HCT116 (cell line): ENCODE measurements at regions of chr14 and their contacts with region 1.

Region 1: GRCh38 chr14:56491299-56492285 is 88.0 kb upstream of the TMEM260 start:
- DNase-seq: peak; percentile 79
- ATAC-seq: peak; percentile 89
- H3K4me3 ChIP-seq: no peak overlapping the region
- H3K27ac ChIP-seq: no peak overlapping the region
- H3K4me1 ChIP-seq: no peaks in the 10 kb centered on the region
- H3K27me3 ChIP-seq: 0 out of 2 replicates have a peak, but pooled peaks cover 4% of the 10 kb centered on the region
- CTCF ChIP-seq: peak; percentile 55 to 81 (median 76); a peak in 5 of 6 replicates
- POLR2A ChIP-seq: no peak
- RAD21 ChIP-seq: peak; percentile 77

Region 2: DNA sequence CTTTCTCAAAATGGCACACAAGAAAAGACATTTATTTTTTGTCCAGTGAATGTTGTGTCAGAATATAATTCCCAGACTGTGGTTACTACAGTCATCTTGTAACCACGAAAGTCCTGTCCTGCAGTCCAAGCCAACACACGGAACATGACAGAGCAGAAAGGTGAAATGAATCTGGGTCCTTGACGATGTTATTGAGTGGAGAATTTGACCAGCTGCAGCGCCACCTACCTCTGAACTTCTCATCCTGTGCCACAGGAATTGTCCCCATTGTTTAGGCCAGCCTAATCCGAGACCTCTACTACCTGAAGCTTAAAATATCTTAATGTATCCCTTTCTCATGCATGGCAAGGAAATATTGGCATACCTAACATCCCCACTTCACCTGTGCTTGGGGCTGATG is 382.8 kb after region 1 on chr14:
- CTCF ChIA-PET with region 1: interaction called, 3 read pairs
- POLR2A ChIA-PET with region 1: no interaction called
- RAD21 ChIA-PET with region 1: no interaction called
- intact Hi-C with region 1: loop called (anchors 1 kb)
- DNase-seq: peak; percentile 26
- ATAC-seq: peak; percentile 96
- H3K4me3 ChIP-seq: no peak overlapping the region
- H3K27ac ChIP-seq: no peak overlapping the region
- H3K4me1 ChIP-seq: no peaks in the 10 kb centered on the region; a peak in 1 of 4 replicates
- H3K27me3 ChIP-seq: peaks cover 9% of the 10 kb centered on the region; the same call in 1 of the 2 replicates
- CTCF ChIP-seq: peak; percentile 23 to 72 (median 64); a peak in 5 of 6 replicates
- POLR2A ChIP-seq: no peak
- RAD21 ChIP-seq: peak; percentile 49

Region 3: DNA sequence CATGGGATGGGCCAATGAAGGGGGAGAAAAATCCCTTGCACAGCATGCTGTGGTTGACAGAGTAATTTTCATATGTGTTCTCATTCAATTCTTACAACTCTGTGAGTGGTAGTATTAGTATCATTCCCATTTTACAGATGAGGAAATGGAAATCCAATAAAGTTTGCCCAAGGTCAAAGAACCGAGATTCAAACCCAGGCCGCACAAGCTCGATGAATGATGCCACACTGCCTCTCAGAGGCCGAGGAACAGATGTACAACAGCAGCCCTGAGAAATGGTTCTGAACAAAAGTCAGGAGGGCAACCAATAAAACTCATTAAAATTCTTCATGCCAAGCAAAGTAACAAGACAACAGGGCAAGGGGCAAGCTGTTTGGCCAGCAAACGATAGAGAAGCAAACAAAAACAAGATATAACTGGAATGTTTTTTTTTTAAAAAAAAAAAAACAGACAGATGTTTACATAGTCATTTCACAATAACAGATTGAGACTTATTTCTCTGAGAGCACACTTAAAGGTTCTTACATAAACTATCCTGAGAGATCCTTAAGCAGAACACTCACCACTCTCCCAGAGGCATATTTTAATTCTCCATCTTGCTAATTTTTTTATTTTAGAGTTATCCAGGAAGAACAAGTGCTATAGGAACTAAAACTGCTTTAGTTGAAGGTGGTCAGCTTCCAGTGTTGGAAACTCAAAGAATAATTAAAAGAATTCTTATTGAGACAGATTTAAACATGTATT is 691.3 kb after region 1 on chr14:
- CTCF ChIA-PET with region 1: interaction called, 25 read pairs
- POLR2A ChIA-PET with region 1: no interaction called
- RAD21 ChIA-PET with region 1: interaction called in 1 of 2 experiments, 3 read pairs
- intact Hi-C with region 1: loop called (anchors 1 kb)
- DNase-seq: peak; percentile 16
- ATAC-seq: peak; percentile 78
- H3K4me3 ChIP-seq: no peak overlapping the region
- H3K27ac ChIP-seq: no peak overlapping the region
- H3K4me1 ChIP-seq: no peaks in the 10 kb centered on the region
- H3K27me3 ChIP-seq: peaks cover 28% of the 10 kb centered on the region
- CTCF ChIP-seq: peak; percentile 63 to 75 (median 64)
- POLR2A ChIP-seq: no peak
- RAD21 ChIP-seq: peak; percentile 86

Region 4: GRCh38 chr14:57293866-57294837 is 802.6 kb after region 1 on chr14:
- CTCF ChIA-PET with region 1: interaction called, 6 read pairs
- POLR2A ChIA-PET with region 1: no interaction called
- RAD21 ChIA-PET with region 1: no interaction called
- intact Hi-C with region 1: loop called (anchors 5 kb)
- DNase-seq: no peak
- ATAC-seq: no peak
- H3K4me3 ChIP-seq: no peak overlapping the region
- H3K27ac ChIP-seq: no peak overlapping the region
- H3K4me1 ChIP-seq: no peaks in the 10 kb centered on the region
- H3K27me3 ChIP-seq: no peaks in the 10 kb centered on the region
- CTCF ChIP-seq: peak in 2 of 3 experiments; percentile 18 to 30; a peak in 2 of 6 replicates
- POLR2A ChIP-seq: no peak
- RAD21 ChIP-seq: peak; percentile 50

Region 5: GRCh38 chr14:57378669-57379068 is 887.1 kb after region 1 on chr14:
- CTCF ChIA-PET with region 1: interaction called, 3 read pairs
- POLR2A ChIA-PET with region 1: no interaction called
- RAD21 ChIA-PET with region 1: interaction called in 1 of 2 experiments, 4 read pairs
- intact Hi-C with region 1: loop called (anchors 2 kb)
- DNase-seq: no peak
- ATAC-seq: no peak
- H3K4me3 ChIP-seq: no peak overlapping the region
- H3K27ac ChIP-seq: no peak overlapping the region
- H3K4me1 ChIP-seq: peaks cover 0 to 14% of the 10 kb centered on the region in 2 experiments; a peak in 2 of 4 replicates
- H3K27me3 ChIP-seq: no peaks in the 10 kb centered on the region
- CTCF ChIP-seq: peak in 1 of 3 experiments; percentile 31; a peak in 2 of 6 replicates
- POLR2A ChIP-seq: no peak
- RAD21 ChIP-seq: peak; percentile 57